ENCODE measurements at regions of chr19 and their contacts with region 1.

Region 1: GRCh38 chr19:49877020-49877878 is at the starts of genes AKT1S1 and TBC1D17:
- DNase-seq: peak; percentile 99
- H3K4me3 Mint-ChIP-seq: no peak within 1 kb of the TSS
- H3K27ac Mint-ChIP-seq: no peak within 1 kb of the TSS
- H3K4me1 Mint-ChIP-seq: peaks cover 32% of the 10 kb centered on the region
- H3K27me3 Mint-ChIP-seq: no peaks in the 10 kb centered on the region
- total RNA-seq, gene AKT1S1: 20.2 to 23.0 TPM
- total RNA-seq, gene TBC1D17: 42.3 to 47.6 TPM

Region 2: GRCh38 chr19:49817964-49818648 is 59.1 kb before region 1 on chr19 and contains the start of gene MED25:
- CTCF ChIA-PET with region 1: no interaction called
- POLR2A ChIA-PET with region 1: interaction called, 10 read pairs
- DNase-seq: peak; percentile 89
- H3K4me3 Mint-ChIP-seq: peak within 1 kb of the TSS; percentile 86
- H3K27ac Mint-ChIP-seq: peak within 1 kb of the TSS; percentile 93
- H3K4me1 Mint-ChIP-seq: peaks cover 36% of the 10 kb centered on the region
- H3K27me3 Mint-ChIP-seq: no peaks in the 10 kb centered on the region
- total RNA-seq, gene MED25: 65.3 to 67.9 TPM

Region 3: DNA sequence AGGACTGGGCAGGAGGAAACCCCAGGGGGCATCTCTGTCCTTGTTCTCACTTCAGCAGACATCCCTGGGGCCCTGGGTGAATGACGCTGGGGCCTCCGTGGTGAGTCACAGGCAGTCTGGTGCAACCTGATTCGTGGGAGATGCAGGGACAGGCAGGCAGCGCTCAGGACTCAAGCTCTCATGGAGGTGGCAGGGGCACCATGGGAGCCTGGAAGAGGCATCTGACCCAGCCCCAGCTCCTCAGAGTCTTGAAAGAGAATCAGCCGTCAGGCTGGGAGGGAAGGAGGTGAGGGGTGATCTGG is 40.3 kb before region 1 on chr19:
- CTCF ChIA-PET with region 1: no interaction called
- POLR2A ChIA-PET with region 1: no interaction called
- DNase-seq: no peak
- H3K4me3 Mint-ChIP-seq: no peak overlapping the region
- H3K27ac Mint-ChIP-seq: no peak overlapping the region
- H3K4me1 Mint-ChIP-seq: peaks cover 21% of the 10 kb centered on the region
- H3K27me3 Mint-ChIP-seq: no peaks in the 10 kb centered on the region

Region 4: DNA sequence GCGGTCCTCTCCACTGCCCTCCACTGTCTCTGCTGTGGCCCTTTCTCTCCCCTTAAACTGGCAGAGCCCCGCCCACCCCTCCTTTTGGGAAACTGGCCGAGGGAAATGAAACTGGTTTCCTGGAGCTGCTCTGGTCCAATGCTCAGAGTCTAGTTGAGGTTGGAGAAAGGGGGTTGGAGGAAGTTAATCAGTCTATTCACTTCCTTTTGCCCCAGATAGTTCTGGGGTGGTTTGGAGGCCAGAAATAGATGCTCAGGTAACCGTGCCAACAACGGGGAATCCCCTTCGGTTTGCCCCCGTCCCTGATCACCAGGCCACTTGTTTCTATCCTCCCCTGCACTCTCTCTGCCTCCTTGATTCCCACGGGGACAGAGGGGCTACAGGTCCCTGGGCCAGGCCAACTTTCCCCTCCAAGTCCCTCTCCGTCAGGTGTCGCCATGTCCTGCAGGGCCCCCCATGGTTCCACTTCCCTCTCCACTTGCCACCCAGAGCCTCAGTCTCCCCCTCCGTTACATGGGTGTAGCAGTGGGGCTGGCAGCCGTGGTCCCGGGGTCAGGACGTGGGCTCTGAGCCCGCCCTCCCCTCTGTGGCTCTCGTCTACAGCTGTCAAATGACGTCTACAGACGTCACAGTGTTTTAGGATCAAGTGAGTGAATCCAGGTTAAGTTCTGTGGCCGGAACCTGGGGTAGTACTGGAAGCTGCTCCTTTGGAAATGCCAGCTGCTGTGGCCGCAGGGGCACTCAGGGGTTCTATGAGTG is 19.8 kb after region 1 on chr19 and contains the start of gene IL4I1:
- CTCF ChIA-PET with region 1: no interaction called
- POLR2A ChIA-PET with region 1: interaction called, 13 read pairs
- DNase-seq: peak; percentile 76
- H3K4me3 Mint-ChIP-seq: peak within 1 kb of the TSS; percentile 80
- H3K27ac Mint-ChIP-seq: peak within 1 kb of the TSS; percentile 97
- H3K4me1 Mint-ChIP-seq: peaks cover 52% of the 10 kb centered on the region
- H3K27me3 Mint-ChIP-seq: no peaks in the 10 kb centered on the region
- total RNA-seq, gene IL4I1: 25.7 to 26.4 TPM